ENCODE measurements at regions of chr19 and their contacts with region 1.

Region 1: DNA sequence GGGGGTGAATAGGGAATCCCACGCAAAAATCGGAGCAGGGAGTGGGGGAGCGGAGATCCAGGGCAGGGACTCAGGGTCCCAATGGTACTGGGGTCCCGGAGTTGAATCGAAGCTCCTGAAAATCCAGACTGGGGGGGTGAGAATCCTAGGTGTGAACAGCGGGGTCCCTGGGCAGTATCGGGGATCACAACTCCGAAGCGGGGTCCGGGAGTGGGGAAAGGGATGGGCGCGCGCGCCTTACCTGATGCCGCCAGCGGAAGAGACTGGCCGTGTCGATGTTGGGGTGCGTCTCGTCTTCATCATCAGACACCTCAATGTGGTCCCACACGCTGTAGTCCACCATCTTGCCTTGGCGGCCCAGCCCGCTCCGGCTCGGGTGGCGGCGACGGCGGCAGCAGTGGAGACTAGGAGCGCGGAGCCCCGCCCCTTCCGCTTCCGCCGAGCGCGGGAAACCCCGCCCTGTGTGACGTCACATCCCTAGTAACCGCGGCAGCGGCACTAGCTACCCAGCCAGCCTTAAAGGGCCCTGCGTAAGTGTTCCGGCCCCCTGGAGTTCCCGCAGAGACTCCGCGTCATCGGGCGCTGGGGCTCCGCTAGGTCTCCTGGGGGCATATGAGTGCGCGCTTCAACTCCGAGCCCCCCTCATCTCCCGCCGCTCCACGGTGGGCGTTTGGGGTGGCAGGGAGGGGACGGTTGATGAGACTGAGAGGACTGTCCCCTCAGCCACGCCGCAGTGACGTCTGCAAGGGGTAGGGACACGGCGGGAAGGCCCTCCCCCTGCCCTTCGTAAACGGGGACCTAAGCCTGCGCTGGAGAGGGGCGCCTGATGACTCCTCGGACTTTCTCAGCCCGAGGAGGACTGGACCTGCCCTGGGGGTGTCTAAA is at the start of gene CDC37:
- DNase-seq: peak; percentile 98
- ATAC-seq: peak; percentile 93
- H3K4me3 ChIP-seq: peak within 1 kb of the TSS; percentile 89
- H3K27ac ChIP-seq: peak within 1 kb of the TSS; percentile 71
- H3K4me1 ChIP-seq: peaks cover 47% of the 10 kb centered on the region
- H3K27me3 ChIP-seq: peaks cover 7% of the 10 kb centered on the region
- CTCF ChIP-seq: no peak
- total RNA-seq, gene CDC37: 154 TPM

Region 2: GRCh38 chr19:10259162-10259905 is 144.0 kb before region 1 on chr19:
- intact Hi-C with region 1: loop called (anchors 5 kb)
- DNase-seq: peak; percentile 92
- ATAC-seq: peak; percentile 86
- H3K4me3 ChIP-seq: no peak overlapping the region
- H3K27ac ChIP-seq: peak overlapping the region; percentile 78
- H3K4me1 ChIP-seq: peaks cover 9% of the 10 kb centered on the region
- H3K27me3 ChIP-seq: no peaks in the 10 kb centered on the region
- CTCF ChIP-seq: peak; percentile 77

Region 3: DNA sequence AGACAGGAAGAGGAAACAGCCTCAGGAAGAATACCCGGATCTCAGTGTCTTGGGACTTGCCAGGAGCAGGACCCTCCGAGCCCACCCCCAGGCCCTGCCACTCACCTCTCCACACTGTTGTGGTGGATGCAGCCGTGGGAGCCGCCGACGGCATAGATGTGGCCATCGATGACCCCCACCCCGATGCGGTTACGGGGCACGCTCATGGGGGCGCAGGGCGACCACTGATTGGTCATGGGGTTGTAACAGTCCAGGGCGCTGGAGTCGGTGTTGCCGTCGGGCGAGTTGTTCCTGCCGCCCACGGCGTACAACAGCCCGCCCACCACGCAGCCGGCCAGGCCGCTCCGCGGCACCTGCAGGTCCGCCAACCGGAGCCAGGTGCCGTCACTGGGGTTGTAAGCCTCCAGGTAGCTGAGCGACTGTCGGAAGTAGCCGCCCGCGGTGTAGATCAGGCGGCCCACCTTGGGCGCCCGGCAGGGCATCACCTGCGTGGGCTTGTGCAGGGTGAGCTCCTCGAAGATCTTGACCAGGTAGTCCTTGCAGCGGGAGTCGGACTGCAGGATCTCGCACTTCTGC is 88.2 kb after region 1 on chr19:
- intact Hi-C with region 1: no loop called
- DNase-seq: no peak
- ATAC-seq: peak; percentile 30
- H3K4me3 ChIP-seq: no peak overlapping the region
- H3K27ac ChIP-seq: no peak overlapping the region
- H3K4me1 ChIP-seq: no peaks in the 10 kb centered on the region
- H3K27me3 ChIP-seq: no peaks in the 10 kb centered on the region
- CTCF ChIP-seq: no peak

Measured in upper lobe of right lung (tissue), 1 donor.